Activated T-helper 1 cell treated with anti-CD3 and anti-CD28 coated beads, Interleukin-12 subunit alpha, Interleukin-12 subunit beta, Interleukin-2, Interleukin-4 antibody, amounts not matched to agents 30 ng/mL and 10 ng/mL and 1 ng/mL, durations not matched to agents 14 hours and 24 hours and 36 hours (primary cell): ENCODE measurements at regions of chr2 and their contacts with region 1.

Region 1: GRCh38 chr2:178193823-178194599 is at the start of gene OSBPL6:
- DNase-seq: peak; percentile 75
- H3K4me3 Mint-ChIP-seq: peak within 1 kb of the TSS; percentile 80
- H3K27ac Mint-ChIP-seq: no peak within 1 kb of the TSS
- H3K4me1 Mint-ChIP-seq: peaks cover 11% of the 10 kb centered on the region
- H3K27me3 Mint-ChIP-seq: peaks cover 57% of the 10 kb centered on the region
- total RNA-seq, gene OSBPL6: 1.5 and 1.9 TPM in 2 replicates

Region 2: DNA sequence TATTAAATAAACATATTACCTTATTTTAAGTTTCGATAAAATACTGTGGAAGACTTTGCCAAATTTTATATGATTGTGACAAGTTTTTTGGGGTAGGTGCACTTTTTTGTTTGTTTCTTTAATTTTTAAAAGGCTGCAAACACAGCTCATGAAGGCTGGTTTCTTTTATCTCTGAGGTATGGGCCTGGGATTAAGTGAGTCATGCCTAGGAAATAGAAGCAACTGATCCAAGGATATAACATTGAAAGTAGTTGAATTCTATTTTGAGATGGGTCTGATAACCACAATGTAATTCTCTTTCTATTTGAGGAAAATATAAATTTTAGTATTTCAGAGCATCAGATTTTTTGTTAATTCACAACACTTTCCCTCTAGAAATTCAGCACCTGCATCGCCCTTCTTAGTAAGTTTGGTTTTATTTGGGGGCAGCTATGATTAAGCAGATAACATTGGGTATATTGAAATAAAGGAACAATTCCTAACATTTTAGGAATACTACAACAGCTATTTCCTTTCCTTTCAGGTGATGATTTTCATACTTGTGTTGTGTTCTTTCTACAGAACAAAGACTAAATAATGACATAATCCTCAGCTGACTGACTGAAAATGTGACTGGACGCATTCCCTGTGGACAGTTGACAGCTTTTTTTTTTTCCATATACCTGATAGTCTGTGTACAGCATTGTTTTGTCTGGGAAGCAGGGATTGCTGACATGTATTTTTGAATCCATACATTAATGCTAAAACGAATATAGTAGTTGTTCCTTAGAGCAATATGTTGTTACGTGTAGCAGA is 65.0 kb before region 1 on chr2:
- intact Hi-C with region 1: loop called (anchors 5 kb)
- DNase-seq: no peak
- H3K4me3 Mint-ChIP-seq: no peak overlapping the region
- H3K27ac Mint-ChIP-seq: no peak overlapping the region
- H3K4me1 Mint-ChIP-seq: peaks cover 6% of the 10 kb centered on the region
- H3K27me3 Mint-ChIP-seq: no peaks in the 10 kb centered on the region

Region 3: DNA sequence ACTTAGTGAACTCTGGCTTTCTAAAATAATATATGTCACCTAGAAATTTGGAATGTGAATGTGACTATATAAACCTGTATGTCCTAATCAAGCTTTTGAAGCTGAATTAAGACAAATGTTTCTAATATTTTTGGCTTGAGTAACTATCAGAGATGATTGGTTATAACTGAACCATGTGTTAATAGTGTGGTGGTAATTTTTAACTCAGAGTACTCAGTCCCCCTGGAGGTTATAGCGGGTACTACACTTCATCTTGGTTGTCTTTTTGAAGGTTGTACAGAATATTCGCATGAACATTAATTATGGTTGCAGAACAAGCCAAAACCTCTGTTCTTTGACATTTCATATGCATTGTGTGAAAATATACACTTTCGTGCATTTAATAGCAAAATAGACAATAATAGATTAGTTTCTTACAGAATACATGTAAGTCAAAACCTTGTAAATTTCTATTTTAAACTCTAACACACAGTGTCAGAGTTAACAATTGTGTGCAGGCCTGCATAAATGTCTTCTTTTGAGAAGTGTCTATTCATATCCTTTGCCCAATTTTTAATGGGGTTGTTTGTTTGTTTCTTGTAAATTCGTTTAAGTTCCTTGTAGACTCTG is 86.3 kb after region 1 on chr2:
- intact Hi-C with region 1: loop called (anchors 2 kb)
- DNase-seq: peak; percentile 12
- H3K4me3 Mint-ChIP-seq: no peak overlapping the region
- H3K27ac Mint-ChIP-seq: no peak overlapping the region
- H3K4me1 Mint-ChIP-seq: no peaks in the 10 kb centered on the region
- H3K27me3 Mint-ChIP-seq: peaks cover 10% of the 10 kb centered on the region

Region 4: DNA sequence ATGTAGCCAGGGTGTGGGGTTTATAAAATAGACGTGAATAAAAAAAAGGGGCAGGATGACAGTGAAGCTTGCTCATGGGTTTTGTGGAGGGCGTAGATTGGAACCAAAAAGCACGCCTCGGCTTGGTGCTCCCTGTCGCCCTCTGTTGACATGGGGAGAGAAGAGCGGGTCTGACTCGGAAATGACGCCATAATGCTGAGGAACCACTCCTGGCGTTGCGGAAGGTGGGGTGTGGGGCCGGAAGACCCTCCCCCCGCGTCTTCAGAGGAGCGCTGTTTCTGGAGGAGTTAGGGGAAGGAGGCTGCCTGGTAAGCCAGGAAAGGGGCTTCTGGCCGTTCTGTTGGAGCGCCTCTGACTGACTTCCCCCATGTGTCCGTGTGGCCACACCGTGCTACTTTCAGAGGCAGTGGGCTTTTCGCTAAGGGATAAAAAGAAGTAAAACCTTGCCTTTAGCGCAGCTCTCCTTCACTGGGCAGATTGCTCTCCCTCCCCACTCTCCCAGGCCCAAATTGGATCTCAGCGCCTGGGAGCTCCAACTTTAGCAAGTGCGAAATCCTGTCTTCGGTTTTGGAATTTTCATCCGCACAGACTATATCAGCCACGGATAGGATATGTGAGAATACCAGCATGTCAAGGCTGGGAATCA is 329.1 kb after region 1 on chr2:
- intact Hi-C with region 1: loop called (anchors 5 kb)
- DNase-seq: peak; percentile 80
- H3K4me3 Mint-ChIP-seq: peak overlapping the region; percentile 99
- H3K27ac Mint-ChIP-seq: peak overlapping the region; percentile 92
- H3K4me1 Mint-ChIP-seq: peaks cover 42% of the 10 kb centered on the region
- H3K27me3 Mint-ChIP-seq: no peaks in the 10 kb centered on the region